ENCODE measurements at regions of chr15 and their contacts with region 1.

Region 1: GRCh38 chr15:71278989-71279756 is 163.9 kb downstream of the THSD4 start:
- DNase-seq: peak in 1 of 3 donors; percentile 86
- ATAC-seq: peak; percentile 81
- H3K4me3 ChIP-seq: no peak overlapping the region
- H3K4me1 ChIP-seq: peaks cover 8% of the 10 kb centered on the region
- CTCF ChIP-seq: no peak

Region 2: GRCh38 chr15:71329497-71330260 is 50.5 kb after region 1 on chr15:
- intact Hi-C with region 1: loop called in 1 of 2 experiments (anchors 10 kb)
- DNase-seq: peak; percentile 66 to 71 (median 71)
- ATAC-seq: peak; percentile 91
- H3K4me3 ChIP-seq: no peak overlapping the region
- H3K4me1 ChIP-seq: peaks cover 28% of the 10 kb centered on the region
- CTCF ChIP-seq: no peak

Region 3: GRCh38 chr15:71357321-71357732 is 78.2 kb after region 1 on chr15:
- intact Hi-C with region 1: no loop called
- DNase-seq: peak; percentile 54 to 67 (median 65)
- ATAC-seq: peak; percentile 80
- H3K4me3 ChIP-seq: no peak overlapping the region
- H3K4me1 ChIP-seq: peaks cover 24% of the 10 kb centered on the region
- CTCF ChIP-seq: no peak

Measured in mucosa of descending colon (tissue), 3 donors.